Gastrocnemius medialis (tissue), 4 donors: ENCODE measurements at regions of chr2 and their contacts with region 1.

Region 1: GRCh38 chr2:111705711-111706336 is 178.2 kb downstream of the ANAPC1 start:
- DNase-seq: peak; percentile 81 to 90
- ATAC-seq: peak; percentile 58 to 80
- H3K4me3 ChIP-seq: no peak overlapping the region
- H3K27ac ChIP-seq: peak overlapping the region; percentile 27 to 78 (median 66)
- H3K4me1 ChIP-seq: peaks cover 50 to 55% of the 10 kb centered on the region in 2 donors
- H3K27me3 ChIP-seq: no peaks in the 10 kb centered on the region
- CTCF ChIP-seq: no peak
- POLR2A ChIP-seq: no peak

Region 2: DNA sequence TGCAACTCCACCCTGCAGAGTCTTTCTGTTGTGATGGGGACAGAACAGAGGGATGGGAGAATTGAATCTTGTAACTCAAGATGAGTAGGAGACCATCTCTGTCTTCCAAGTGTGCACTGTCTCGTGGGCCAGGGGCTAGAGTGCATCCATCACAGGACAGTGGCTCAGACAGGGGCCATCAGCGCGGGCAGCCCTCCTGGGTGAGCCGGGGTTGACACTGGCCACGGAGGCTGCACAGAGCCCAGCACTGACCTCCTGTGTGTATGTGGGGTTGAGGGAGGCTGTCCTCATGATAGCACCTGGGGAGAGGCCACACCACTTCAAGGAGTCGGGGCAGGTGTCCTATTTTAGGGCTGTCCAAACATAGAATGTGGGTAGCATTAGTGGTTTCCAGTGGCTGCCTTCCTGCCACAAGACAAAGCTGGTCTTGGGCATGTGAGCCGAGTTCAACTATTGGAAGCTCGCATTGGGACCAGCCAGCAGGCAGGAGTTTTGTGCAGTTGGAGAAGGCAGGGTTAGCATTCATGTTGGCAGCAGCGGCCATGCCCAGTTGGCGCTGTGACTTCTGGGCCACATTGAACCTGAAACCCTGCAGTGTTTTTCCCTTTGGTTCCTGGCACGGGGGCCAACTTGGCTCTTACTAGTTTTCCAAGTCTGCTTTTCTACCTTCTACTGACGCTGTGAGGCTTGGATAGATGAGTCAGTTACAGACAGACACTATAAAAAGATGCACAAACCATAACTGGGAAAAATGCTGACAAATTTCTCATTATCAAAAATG is 928.1 kb before region 1 on chr2:
- in situ Hi-C with region 1: loop called in 1 of 4 experiments (anchors 25 kb)
- intact Hi-C with region 1: no loop called
- DNase-seq: peak; percentile 71 to 84
- ATAC-seq: peak; percentile 59 to 73
- H3K4me3 ChIP-seq: no peak overlapping the region
- H3K27ac ChIP-seq: peak overlapping the region; percentile 67 to 75 (median 73)
- H3K4me1 ChIP-seq: peaks cover 28% of the 10 kb centered on the region in 2 donors
- H3K27me3 ChIP-seq: no peaks in the 10 kb centered on the region
- CTCF ChIP-seq: no peak
- POLR2A ChIP-seq: no peak

Region 3: GRCh38 chr2:110804915-110805314 is 900.9 kb before region 1 on chr2:
- in situ Hi-C with region 1: loop called in 1 of 4 experiments (anchors 25 kb)
- intact Hi-C with region 1: no loop called
- DNase-seq: no peak
- ATAC-seq: no peak
- H3K4me3 ChIP-seq: no peak overlapping the region
- H3K27ac ChIP-seq: no peak overlapping the region
- H3K4me1 ChIP-seq: peaks cover 14 to 18% of the 10 kb centered on the region in 2 donors
- H3K27me3 ChIP-seq: no peaks in the 10 kb centered on the region
- CTCF ChIP-seq: no peak
- POLR2A ChIP-seq: no peak

Region 4: DNA sequence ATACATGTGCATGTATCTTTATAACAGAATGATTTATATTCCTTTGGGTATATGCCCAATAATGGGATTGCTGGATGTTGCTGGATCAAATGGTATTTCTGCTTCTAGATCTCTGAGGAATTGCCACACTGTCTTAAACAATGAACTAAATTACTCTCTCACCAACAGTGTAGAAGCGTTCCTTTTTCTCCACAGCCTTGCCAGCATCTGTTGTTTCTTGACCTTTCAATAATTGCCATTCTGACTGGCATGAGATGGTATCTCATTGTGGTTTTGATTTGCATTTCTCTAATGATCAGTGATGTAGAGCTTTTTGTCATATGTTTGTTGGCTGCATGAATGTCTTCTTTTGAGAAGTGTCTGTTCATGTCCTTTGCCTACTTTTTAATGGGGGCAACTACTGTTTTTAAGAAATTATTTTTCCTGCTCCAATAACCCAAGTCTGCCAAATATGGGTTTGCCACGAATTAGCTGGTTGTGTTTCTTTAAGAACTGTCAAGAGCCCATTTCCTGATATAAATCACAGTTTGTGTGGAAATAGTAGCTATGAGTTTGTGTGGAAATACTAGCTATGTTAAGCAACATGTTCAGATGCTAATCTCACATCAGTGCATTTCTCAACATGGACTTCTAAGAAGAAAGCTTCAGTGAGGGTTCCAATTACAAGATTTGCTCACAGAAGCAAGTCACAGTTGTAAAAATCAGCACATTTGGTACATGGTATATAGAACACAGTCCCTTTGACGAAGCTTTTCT is 81.2 kb before region 1 on chr2:
- in situ Hi-C with region 1: loop called in 1 of 4 experiments (anchors 10 kb)
- intact Hi-C with region 1: loop called (anchors 1 kb)
- DNase-seq: no peak
- ATAC-seq: peak; percentile 95 to 99
- H3K4me3 ChIP-seq: no peak overlapping the region
- H3K27ac ChIP-seq: peak overlapping the region; percentile 42 to 78 (median 56)
- H3K4me1 ChIP-seq: peaks cover 22 to 42% of the 10 kb centered on the region in 2 donors
- H3K27me3 ChIP-seq: no peaks in the 10 kb centered on the region
- CTCF ChIP-seq: no peak
- POLR2A ChIP-seq: no peak